ENCODE measurements at regions of chr3 and their contacts with region 1.

Region 1: GRCh38 chr3:141279077-141279967 is 47.7 kb downstream of the PXYLP1 start:
- DNase-seq: no peak
- H3K4me3 ChIP-seq: no peak overlapping the region
- CTCF ChIP-seq: no peak
- POLR2A ChIP-seq: no peak

Region 2: DNA sequence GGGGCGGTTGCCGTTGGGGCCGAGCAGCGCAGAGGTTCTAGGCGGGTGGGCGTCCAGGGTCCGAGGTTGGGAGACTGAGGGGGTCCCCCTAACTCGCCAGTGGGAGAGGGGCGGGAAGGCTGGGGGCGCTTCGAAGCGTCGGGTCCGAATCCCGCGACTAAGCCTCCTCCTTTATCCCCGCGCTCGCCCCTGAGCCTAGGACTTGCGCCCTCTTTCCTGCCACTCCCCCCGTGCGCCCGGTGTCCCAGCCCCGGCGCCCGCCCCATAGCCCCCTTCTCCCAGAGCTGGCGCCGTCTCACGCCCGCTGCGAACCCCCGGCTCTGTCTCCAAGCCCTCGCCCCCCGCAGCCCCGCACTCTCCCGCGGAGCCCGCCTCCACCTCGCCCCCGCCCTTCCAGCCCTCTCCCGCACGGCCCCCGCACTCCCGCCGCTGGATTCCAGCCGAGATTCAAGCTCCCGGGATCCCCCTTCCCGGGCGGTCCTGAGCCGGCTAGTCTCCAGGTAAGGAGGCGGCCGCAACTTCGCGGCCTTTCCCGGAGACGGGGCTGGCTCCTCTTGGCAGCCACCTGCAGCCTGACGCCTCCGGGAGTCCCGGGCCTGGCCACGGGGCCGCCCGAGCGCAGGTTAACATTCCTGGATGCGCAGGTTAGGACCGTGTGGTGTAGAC is 47.3 kb before region 1 on chr3:
- intact Hi-C with region 1: loop called (anchors 2 kb)
- DNase-seq: peak in 1 of 2 donors; percentile 90
- H3K4me3 ChIP-seq: peak overlapping the region; percentile 56
- CTCF ChIP-seq: no peak
- POLR2A ChIP-seq: no peak